ENCODE measurements at regions of chr5 and their contacts with region 1.

Region 1: GRCh38 chr5:76314643-76315042 is 88.4 kb upstream of the IQGAP2 start:
- DNase-seq: no peak
- H3K4me3 ChIP-seq: no peak overlapping the region
- H3K27ac ChIP-seq: no peak overlapping the region
- H3K4me1 ChIP-seq: no peaks in the 10 kb centered on the region
- H3K27me3 ChIP-seq: no peaks in the 10 kb centered on the region
- CTCF ChIP-seq: no peak
- EP300 ChIP-seq: no peak
- POLR2A ChIP-seq: no peak
- RAD21 ChIP-seq: no peak

Region 2: GRCh38 chr5:76303921-76304320 is 10.7 kb before region 1 on chr5:
- CTCF ChIA-PET with region 1: interaction called, 29 read pairs
- POLR2A ChIA-PET with region 1: no interaction called
- DNase-seq: no peak
- H3K4me3 ChIP-seq: no peak overlapping the region
- H3K27ac ChIP-seq: no peak overlapping the region
- H3K4me1 ChIP-seq: no peaks in the 10 kb centered on the region
- H3K27me3 ChIP-seq: no peaks in the 10 kb centered on the region
- CTCF ChIP-seq: no peak
- EP300 ChIP-seq: no peak
- POLR2A ChIP-seq: no peak
- RAD21 ChIP-seq: no peak

Region 3: DNA sequence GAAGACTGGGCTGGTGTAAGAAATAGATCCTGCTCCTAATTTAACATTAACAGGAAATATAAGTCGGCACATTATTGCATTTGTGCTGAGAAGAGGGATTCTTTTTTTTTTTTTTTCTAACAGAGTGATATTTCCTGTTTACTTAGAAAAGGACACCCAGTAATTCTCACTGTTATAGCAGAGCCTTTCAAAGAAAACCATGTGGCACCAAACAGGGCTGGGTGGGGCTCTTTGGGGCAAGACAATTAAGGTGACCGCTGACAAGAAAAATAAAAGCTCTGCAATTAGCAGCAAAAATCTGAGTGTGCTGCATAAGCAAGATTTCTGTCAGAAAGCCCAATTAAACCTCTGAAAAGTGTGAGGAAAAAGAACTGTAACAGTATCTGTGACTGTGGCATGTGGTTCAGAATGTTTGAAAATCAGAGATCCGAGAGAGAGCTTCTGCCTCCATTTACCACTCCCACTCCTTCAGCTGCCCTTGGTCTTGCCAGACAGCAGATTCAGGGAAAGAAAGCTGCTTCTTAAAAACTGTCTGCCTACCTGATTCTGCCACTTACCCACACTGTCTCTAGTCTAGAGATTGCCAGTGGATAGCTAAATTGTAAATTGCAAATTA is 11.3 kb after region 1 on chr5:
- CTCF ChIA-PET with region 1: interaction called, 29 read pairs
- POLR2A ChIA-PET with region 1: interaction called, 3 read pairs
- DNase-seq: no peak
- H3K4me3 ChIP-seq: peak overlapping the region in 1 of 4 experiments; percentile 54; a peak in 3 of 8 replicates
- H3K27ac ChIP-seq: no peak overlapping the region
- H3K4me1 ChIP-seq: peaks cover 12 to 26% (median 14%) of the 10 kb centered on the region in 4 experiments; a peak in 6 of 7 replicates
- H3K27me3 ChIP-seq: peaks cover 0 to 2% (median under 1%) of the 10 kb centered on the region in 4 experiments; a peak in 3 of 7 replicates
- CTCF ChIP-seq: no peak
- EP300 ChIP-seq: no peak
- POLR2A ChIP-seq: no peak
- RAD21 ChIP-seq: no peak

Measured in H1 (cell line).